ENCODE measurements at regions of chr12 and their contacts with region 1.

Region 1: DNA sequence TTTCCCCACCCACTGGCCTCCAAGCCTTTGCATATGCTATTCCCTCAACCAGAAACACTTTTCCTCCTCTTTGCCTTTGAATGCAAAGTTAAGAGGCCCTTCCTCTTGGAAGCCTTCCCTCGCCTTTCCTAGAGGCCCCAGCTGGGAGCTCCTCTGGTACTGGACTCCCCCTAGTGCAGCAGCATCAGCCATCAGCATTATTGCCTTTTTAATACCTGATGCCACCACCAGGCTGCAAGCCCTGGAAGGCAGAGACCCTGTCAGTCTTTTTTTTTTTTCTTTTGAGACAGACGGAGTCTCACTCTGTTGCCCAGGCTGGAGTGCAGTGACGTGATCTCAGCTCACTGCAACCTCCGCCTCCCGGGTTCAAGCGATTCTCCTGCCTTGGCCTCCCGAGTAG is 19.1 kb upstream of the PLA2G1B start:
- DNase-seq: no peak
- ATAC-seq: no peak
- H3K4me3 ChIP-seq: no peak overlapping the region
- H3K27ac ChIP-seq: no peak overlapping the region
- H3K4me1 ChIP-seq: no peaks in the 10 kb centered on the region
- H3K27me3 ChIP-seq: peaks cover 37% of the 10 kb centered on the region
- CTCF ChIP-seq: no peak
- POLR2A ChIP-seq: no peak
- RAD21 ChIP-seq: no peak

Region 2: GRCh38 chr12:120437754-120438494 is 91.2 kb after region 1 on chr12 and contains the start of gene COX6A1:
- CTCF ChIA-PET with region 1: no interaction called
- POLR2A ChIA-PET with region 1: no interaction called
- dilution Hi-C with region 1: no loop called
- in situ Hi-C with region 1: loop called (anchors 25 kb)
- intact Hi-C with region 1: no loop called
- DNase-seq: peak; percentile 97
- ATAC-seq: peak; percentile 99
- H3K4me3 ChIP-seq: peak within 1 kb of the TSS; percentile 79
- H3K27ac ChIP-seq: peak within 1 kb of the TSS; percentile 59
- H3K4me1 ChIP-seq: peaks cover 4% of the 10 kb centered on the region; the same call in 1 of the 2 replicates
- H3K27me3 ChIP-seq: peaks cover 4% of the 10 kb centered on the region
- CTCF ChIP-seq: no peak
- POLR2A ChIP-seq: peak; percentile 57; the same call in 1 of the 2 replicates
- RAD21 ChIP-seq: no peak
- total RNA-seq, gene COX6A1: 339 and 396 TPM in 2 replicates